Left cardiac atrium (tissue), 4 donors: ENCODE measurements at regions of chrX and their contacts with region 1.

Region 1: DNA sequence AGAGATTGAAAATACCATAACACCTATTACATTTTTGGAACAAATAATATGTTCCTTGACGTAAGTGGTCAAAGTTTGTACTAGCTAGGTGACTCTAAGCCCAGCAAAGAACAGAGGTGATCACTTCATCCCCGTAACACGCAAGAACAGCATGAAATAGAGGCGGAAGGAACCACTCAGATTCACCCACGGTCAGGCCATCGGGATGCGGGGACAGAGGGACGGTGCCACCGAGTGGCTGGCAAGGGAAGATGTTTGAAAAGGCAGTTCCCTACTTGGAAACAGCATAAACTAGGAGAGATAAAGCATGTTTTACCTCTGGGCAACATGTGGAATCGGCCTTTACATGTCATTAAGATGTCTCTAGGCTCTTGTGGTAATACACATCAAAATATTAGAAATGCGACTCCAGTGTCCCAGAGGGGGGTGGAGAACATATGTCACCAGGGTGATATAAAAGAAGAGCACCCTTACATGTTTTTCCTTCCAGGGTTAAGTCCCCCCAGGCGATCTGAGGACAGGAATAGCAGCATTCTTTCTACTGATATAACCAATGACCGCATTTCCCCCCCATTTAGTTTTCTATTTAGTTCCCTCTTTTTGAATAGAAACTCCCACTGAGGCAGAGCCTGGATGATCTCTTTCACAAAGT is 84.0 kb downstream of the PHKA2 start:
- DNase-seq: no peak
- ATAC-seq: no peak

Region 2: DNA sequence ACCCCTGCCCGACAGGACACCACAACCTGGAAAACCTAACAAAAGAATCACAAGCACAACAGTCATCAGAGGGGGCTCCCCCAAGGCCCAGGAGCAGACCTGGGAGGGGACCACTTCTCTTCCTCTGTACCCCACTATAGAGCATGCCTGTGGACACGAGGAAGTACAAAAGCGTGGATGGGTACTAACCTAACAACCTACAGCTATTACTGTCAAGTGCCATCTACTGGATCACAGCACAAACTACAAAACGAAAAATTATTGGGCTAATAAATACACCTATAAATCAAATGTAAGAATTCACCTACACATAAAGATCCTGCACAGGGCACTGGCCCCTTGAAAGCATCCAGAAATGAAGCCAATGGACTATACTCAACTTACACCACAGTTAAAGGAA is 620.9 kb before region 1 on chrX:
- intact Hi-C with region 1: no loop called
- DNase-seq: no peak
- ATAC-seq: no peak

Region 3: GRCh38 chrX:18406531-18407266 is 493.2 kb before region 1 on chrX:
- intact Hi-C with region 1: loop called in 1 of 2 experiments (anchors 10 kb)
- DNase-seq: no peak
- ATAC-seq: no peak

Region 4: DNA sequence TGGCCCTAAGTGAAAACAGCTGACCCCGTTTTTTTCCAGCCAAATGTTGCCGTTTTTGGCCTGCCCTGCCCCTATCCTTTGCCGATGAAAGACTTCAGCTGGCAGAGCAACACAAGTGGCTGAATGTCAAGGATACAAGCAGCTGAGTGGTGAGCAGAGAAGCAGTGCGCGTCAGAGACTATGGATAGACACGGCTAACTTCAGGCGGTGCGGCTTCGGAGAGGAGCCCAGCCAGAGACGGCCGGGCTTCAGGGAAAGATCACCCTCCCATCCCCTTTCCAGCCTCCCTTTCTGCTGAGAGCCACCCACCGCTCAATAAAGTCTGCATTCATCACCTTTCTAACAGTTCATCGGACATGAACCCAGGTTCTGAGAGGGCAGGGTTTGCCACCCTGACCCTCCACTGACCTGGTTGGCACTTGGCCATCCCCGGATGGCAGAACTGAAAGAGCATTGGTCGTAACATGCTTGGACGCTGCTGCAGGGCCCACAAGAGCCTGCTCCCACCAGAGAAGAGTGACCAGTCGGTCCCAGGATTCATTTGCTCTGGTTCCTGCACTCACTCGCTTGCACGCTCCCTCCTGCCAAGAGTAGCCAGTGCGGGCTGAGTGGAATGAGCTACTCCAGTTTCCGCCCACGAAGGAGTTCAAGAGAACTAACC is 66.7 kb before region 1 on chrX:
- intact Hi-C with region 1: no loop called
- DNase-seq: peak; percentile 49
- ATAC-seq: peak; percentile 89 to 97